OCI-LY7 (cell line): ENCODE measurements at regions of chr20 and their contacts with region 1.

Region 1: GRCh38 chr20:53413186-53413631 is 180.4 kb downstream of the ZNF217 start:
- DNase-seq: peak; percentile 76
- H3K4me3 ChIP-seq: no peak overlapping the region
- H3K27ac ChIP-seq: no peak overlapping the region
- H3K4me1 ChIP-seq: no peaks in the 10 kb centered on the region
- CTCF ChIP-seq: peak; percentile 80

Region 2: DNA sequence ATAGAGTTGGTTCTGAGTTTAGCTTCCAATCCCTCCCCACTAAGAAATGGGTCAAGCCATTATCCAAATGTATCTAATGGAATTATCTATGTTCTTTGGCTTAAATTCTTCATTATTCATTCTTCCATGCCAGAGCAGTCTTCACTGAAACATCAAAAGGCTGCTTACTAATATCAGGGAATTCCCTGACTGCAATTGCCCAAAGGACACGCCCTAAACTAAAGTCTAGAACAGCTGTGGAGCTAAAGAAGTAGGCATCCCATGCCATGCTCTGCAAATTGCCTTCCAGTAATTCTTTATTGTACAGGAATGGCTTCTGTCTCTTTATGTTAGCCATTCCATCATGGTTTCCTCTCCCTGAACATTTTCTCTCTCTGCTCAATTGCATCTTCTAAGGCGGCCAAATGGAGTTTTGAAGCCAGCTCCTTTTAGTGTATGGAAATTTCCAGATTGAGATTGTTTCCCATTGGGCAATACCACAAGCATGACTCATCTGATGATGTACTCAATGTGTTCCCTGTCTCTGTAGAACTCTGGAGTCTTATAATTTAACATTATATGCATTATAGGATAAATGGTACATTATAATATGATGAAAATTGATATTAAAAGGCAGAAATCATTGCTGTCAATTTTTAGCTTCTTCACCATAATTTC is 469.9 kb before region 1 on chr20:
- CTCF ChIA-PET with region 1: no interaction called
- POLR2A ChIA-PET with region 1: no interaction called
- intact Hi-C with region 1: no loop called
- DNase-seq: no peak
- H3K4me3 ChIP-seq: no peak overlapping the region
- H3K27ac ChIP-seq: no peak overlapping the region
- H3K4me1 ChIP-seq: no peaks in the 10 kb centered on the region
- CTCF ChIP-seq: no peak

Region 3: DNA sequence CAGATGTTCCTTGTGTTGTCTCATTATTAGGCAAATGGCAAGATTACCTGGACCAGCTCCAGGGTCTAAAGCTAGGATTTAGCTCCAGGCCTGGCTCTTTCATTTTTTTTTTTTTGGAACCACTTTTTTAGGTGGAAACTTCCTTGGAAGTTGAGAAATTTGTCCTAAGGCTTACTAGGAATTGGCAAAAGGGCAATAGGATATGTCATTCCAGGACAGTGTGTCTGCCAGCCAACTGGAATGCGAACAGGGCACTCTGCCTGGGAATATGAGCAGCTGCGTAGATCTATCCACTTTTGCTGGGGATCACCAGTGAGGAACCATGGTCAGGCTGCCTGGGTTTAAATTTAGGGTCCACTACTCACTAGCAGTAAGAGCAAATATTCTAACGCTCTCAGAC is 137.1 kb before region 1 on chr20:
- CTCF ChIA-PET with region 1: no interaction called
- POLR2A ChIA-PET with region 1: no interaction called
- intact Hi-C with region 1: no loop called
- DNase-seq: no peak
- H3K4me3 ChIP-seq: no peak overlapping the region
- H3K27ac ChIP-seq: no peak overlapping the region
- H3K4me1 ChIP-seq: no peaks in the 10 kb centered on the region
- CTCF ChIP-seq: no peak

Region 4: GRCh38 chr20:53291548-53291947 is 121.7 kb before region 1 on chr20:
- CTCF ChIA-PET with region 1: no interaction called
- POLR2A ChIA-PET with region 1: no interaction called
- intact Hi-C with region 1: no loop called
- DNase-seq: peak; percentile 30
- H3K4me3 ChIP-seq: no peak overlapping the region
- H3K27ac ChIP-seq: no peak overlapping the region
- H3K4me1 ChIP-seq: no peaks in the 10 kb centered on the region
- CTCF ChIP-seq: peak; percentile 72

Region 5: DNA sequence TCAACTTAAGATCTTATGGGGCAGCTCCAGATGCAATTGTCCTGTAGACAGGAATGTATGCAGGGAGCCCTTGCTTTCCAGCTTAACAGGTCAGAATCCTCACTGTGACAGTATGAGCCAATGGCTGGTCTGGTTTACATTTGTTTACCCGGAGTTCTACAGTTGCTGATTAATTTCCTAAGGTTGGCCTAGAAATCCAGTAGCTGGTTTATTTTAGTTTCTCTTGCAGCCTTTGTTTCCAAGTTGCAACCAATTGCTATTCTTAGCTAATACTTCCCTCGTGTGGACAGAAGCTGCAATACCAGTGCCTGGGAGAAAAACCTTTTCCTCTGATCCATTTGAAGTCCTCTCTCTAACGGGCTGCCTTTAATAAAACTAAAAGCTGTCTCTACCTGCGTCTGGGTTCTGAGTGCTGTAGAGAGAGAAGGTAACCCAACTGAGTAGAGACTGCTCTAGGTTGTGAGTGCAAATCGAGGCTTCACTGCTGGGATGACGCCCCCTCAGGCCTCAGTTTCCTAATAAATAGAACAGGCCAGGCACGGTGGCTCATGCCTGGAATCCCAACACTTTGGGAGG is 134.5 kb after region 1 on chr20:
- CTCF ChIA-PET with region 1: no interaction called
- POLR2A ChIA-PET with region 1: no interaction called
- intact Hi-C with region 1: loop called (anchors 1 kb)
- DNase-seq: peak; percentile 63
- H3K4me3 ChIP-seq: no peak overlapping the region
- H3K27ac ChIP-seq: no peak overlapping the region
- H3K4me1 ChIP-seq: no peaks in the 10 kb centered on the region
- CTCF ChIP-seq: peak; percentile 85

Region 6: GRCh38 chr20:53594068-53595017 is 181.1 kb after region 1 on chr20:
- CTCF ChIA-PET with region 1: no interaction called
- POLR2A ChIA-PET with region 1: no interaction called
- intact Hi-C with region 1: no loop called
- DNase-seq: peak; percentile 96
- H3K4me3 ChIP-seq: peak overlapping the region; percentile 100
- H3K27ac ChIP-seq: peak overlapping the region; percentile 95
- H3K4me1 ChIP-seq: peaks cover 30% of the 10 kb centered on the region
- CTCF ChIP-seq: peak; percentile 59

Region 7: DNA sequence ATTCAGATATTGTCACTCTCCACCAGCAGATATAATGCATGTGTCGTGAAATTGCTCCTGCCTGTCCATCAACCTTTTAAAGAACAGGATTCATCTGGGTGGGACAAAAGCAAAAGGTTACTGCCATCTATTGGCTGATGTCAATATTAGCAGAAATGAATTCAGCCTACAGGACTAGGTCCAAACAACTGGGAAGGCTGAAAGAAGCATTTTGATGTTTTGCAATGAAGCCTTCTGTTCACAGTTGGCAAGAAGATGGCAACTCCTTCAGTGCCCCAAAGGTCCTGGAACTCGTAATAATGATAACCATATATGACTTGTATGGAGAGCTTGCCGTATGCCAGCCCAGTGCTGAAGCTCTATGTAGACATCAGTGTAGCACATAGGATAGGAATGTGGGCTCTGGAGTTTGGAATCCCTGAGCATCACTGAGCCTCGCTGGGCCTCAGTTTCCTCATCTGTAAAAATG is 649.6 kb after region 1 on chr20:
- CTCF ChIA-PET with region 1: no interaction called
- POLR2A ChIA-PET with region 1: no interaction called
- intact Hi-C with region 1: loop called (anchors 2 kb)
- DNase-seq: peak; percentile 62
- H3K4me3 ChIP-seq: no peak overlapping the region
- H3K27ac ChIP-seq: no peak overlapping the region
- H3K4me1 ChIP-seq: no peaks in the 10 kb centered on the region
- CTCF ChIP-seq: peak; percentile 90